ENCODE measurements at regions of chr2 and their contacts with region 1.

Region 1: DNA sequence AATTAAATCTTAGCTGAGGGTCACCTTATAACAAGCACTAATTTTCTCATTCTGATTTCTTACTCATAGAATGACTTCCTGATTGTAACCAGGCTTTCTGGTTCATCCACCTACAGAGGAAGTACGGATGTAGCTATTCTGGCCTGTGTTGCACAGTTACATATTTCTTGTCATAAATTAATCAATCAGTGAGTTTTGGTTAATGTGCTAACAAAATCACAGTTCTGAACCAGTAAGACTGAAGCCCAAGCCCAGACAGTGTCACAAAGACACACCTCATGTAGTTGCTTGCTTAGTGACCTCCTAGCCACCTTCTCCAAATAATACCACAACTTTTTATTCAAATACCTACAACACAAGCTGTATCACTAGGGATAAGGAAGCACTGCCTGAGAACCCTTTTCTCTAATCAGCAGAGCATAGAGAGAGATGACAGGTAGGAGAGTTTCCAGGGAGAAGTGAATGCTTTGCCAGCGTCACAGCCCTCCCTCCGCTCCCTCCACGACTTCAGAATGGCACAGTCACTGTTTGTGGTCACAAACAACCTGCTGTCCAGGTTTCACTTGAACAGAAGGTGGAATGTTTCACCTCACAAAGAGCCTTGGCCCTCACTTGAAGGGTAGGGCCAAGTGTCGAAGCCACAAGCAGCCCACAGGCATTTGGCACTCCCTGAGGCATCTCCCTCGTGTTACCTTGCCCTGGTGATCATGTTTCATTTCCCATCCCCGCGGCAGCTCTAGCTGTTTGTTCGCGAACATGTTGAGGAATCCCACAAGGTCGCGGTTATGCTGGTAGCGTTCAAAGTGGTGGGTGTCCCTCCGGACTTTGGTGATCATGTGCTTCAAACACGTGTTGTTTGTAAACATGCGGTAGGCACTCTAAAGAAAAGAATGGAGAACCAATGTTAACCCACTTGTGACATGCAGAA is 120.8 kb upstream of the STK17B start:
- DNase-seq: peak in 1 of 14 experiments; percentile 21
- ATAC-seq: peak; percentile 29
- H3K4me3 ChIP-seq: no peak overlapping the region
- H3K4me3 Mint-ChIP-seq: peak overlapping the region; percentile 26
- H3K27ac ChIP-seq: no peak overlapping the region
- H3K27ac Mint-ChIP-seq: peak overlapping the region; percentile 45
- H3K4me1 ChIP-seq: peaks cover 24% of the 10 kb centered on the region
- H3K4me1 Mint-ChIP-seq: peaks cover 51% of the 10 kb centered on the region
- H3K27me3 ChIP-seq: no peaks in the 10 kb centered on the region
- H3K27me3 Mint-ChIP-seq: no peaks in the 10 kb centered on the region
- CTCF ChIP-seq: no peak

Region 2: DNA sequence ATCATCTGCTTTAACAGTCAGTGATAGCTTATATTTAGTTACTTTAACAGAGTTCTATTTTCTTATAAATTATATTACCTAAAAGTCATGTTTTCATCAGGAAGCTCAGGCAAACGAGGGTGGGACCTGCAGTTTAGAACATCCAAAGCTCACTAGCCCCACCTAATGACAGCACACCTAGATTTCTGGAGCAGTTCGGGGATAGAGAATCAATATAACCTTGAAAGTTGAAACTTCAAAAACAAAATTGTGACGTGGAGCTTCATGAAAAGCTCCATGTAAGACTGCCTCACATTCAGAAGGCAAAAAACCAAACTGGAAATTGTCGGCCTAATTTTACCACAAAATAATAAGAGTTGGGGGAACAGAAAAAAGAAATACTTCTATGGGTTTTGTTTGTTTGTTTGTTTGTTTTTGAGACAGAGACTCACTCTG is 161.5 kb after region 1 on chr2:
- CTCF ChIA-PET with region 1: no interaction called
- POLR2A ChIA-PET with region 1: no interaction called
- intact Hi-C with region 1: loop called in 1 of 2 experiments (anchors 10 kb)
- DNase-seq: peak in 10 of 14 experiments; percentile 1 to 63 (median 22)
- ATAC-seq: no peak
- H3K4me3 ChIP-seq: no peak overlapping the region
- H3K4me3 Mint-ChIP-seq: no peak overlapping the region
- H3K27ac ChIP-seq: no peak overlapping the region
- H3K27ac Mint-ChIP-seq: no peak overlapping the region
- H3K4me1 ChIP-seq: no peaks in the 10 kb centered on the region
- H3K4me1 Mint-ChIP-seq: no peaks in the 10 kb centered on the region
- H3K27me3 ChIP-seq: peaks cover 0 to 12% of the 10 kb centered on the region in 2 experiments
- H3K27me3 Mint-ChIP-seq: peaks cover 31% of the 10 kb centered on the region
- CTCF ChIP-seq: peak; percentile 56

Measured in CD4-positive, alpha-beta T cell (primary cell).